Motor neuron (in vitro differentiated cells): ENCODE measurements at regions of chrX and their contacts with region 1.

Region 1: DNA sequence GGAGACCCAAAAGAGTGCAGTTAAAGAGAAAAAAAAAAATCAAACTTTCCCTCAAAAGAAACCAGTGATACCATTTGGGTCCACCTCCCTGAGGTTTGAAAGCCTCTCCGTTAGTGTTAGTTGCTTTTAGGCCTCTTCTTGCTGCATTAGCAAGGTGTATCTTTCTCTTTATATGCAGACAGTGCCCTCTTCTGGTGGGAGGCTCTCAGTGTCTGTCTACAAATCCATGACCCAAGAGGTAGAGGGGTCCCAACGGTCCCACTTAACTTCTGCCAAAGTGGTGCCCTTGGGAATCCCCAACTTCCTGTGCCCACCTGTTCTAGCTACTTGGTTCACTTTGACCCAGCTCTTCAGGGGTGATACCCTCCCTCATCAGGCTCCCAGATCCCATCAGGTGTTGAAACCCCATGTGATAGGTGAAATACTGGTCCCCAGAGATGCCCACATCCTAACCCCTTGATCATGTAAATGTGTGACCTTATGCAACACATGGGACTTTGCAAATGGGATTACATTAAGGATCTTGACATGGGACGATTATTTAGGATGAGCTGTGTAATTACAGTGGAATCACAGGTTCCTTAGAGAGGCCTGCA is 63.7 kb upstream of the CD99 start:
- ATAC-seq: peak in 4 of 8 experiments; percentile 29 to 79 (median 68)
- H3K4me3 ChIP-seq: no peak overlapping the region
- H3K27ac ChIP-seq: no peak overlapping the region
- H3K4me1 ChIP-seq: no peaks in the 10 kb centered on the region

Region 2: GRCh38 chrX:2819345-2820135 is 192.2 kb after region 1 on chrX:
- in situ Hi-C with region 1: loop called in 2 of 9 experiments (anchors 25 kb)
- ATAC-seq: peak in 3 of 8 experiments; percentile 28 to 47 (median 40)
- H3K4me3 ChIP-seq: no peak overlapping the region
- H3K27ac ChIP-seq: no peak overlapping the region
- H3K4me1 ChIP-seq: no peaks in the 10 kb centered on the region